Activated T-helper 1 cell treated with anti-CD3 and anti-CD28 coated beads, Interleukin-12 subunit alpha, Interleukin-12 subunit beta, Interleukin-2, Interleukin-4 antibody, amounts not matched to agents 30 ng/mL and 10 ng/mL and 1 ng/mL, durations not matched to agents 14 hours and 24 hours and 36 hours (primary cell): ENCODE measurements at regions of chr1 and their contacts with region 1.

Region 1: DNA sequence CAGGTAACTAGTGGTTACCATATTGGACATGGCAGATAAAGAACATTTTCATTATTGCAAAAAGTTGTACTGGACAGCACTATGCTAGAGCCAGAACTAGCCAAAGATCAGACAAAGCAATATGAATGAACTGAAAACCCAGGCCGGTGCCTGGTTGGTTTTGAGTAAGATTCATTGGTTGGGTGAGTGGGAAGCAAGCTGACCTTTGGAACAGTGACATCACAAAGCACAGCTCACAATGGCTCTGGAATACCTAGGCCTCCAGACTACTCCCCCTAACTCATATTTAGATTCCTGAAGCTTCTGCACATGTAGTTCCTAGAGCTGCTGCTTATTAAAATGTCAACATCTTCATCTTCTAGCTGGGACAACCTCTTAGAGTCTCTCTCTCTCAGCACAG is at the start of gene TMCO2:
- DNase-seq: no peak
- H3K4me3 Mint-ChIP-seq: no peak within 1 kb of the TSS
- H3K27ac Mint-ChIP-seq: no peak within 1 kb of the TSS
- H3K4me1 Mint-ChIP-seq: peaks cover 39% of the 10 kb centered on the region
- H3K27me3 Mint-ChIP-seq: no peaks in the 10 kb centered on the region
- total RNA-seq, gene TMCO2: not detected in 2 replicates

Region 2: GRCh38 chr1:40204856-40205255 is 42.8 kb before region 1 on chr1:
- intact Hi-C with region 1: loop called (anchors 1 kb)
- DNase-seq: no peak
- H3K4me3 Mint-ChIP-seq: no peak overlapping the region
- H3K27ac Mint-ChIP-seq: no peak overlapping the region
- H3K4me1 Mint-ChIP-seq: peaks cover 5% of the 10 kb centered on the region
- H3K27me3 Mint-ChIP-seq: no peaks in the 10 kb centered on the region

Region 3: DNA sequence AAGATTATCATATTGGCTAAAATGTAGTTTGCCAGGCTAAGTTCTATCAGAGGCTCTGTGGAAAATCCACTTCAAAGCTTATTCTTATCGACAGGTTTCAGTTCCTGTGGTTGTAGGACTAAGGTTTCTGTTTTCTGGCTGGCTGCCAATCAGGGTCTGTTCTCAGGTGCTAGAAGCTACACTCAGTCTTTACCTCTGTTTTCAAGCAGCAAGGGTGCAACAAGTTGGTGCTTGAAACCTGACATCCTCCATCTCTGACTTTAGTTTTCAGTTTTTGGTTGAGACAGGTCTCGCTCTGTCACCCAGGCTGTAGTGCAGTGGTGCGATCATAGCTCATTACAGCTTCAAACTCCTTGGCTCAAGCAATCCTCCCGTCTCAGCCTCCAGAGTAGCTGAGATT is 15.2 kb before region 1 on chr1:
- intact Hi-C with region 1: no loop called
- DNase-seq: peak; percentile 71
- H3K4me3 Mint-ChIP-seq: peak overlapping the region; percentile 47
- H3K27ac Mint-ChIP-seq: peak overlapping the region; percentile 68
- H3K4me1 Mint-ChIP-seq: peaks cover 45% of the 10 kb centered on the region
- H3K27me3 Mint-ChIP-seq: no peaks in the 10 kb centered on the region

Region 4: DNA sequence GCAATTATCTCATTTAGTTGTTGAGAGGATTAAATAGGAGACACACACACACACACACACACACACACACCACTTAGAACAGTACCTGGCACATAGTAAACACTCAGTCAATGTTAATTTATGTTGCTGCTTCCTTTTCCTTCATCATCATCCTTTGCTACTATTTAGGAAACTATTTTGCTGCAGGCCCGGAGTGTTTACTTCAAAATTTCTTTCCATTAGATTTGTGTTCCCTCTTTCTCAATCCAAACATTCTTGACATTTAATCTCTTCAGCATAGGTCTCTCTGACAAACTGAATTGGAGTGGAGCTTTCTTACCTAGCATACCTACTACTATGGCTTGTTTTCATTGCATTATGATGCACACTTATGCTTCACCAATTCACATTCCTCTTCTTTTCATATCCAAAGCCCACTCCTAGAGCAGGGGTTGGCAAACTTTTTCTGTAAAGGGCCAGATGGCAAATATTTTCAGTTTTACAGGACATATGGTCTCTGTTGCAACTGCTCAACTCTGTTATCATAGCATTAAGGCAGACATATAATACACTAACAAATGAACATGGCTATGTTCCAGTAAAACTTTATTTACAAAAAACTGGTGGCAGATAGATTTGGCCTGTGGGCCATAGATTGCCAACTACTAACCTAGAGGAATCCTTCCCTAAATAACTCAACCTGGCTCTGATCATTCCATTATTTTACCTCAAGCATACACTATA is 945.0 kb after region 1 on chr1:
- intact Hi-C with region 1: no loop called
- DNase-seq: no peak
- H3K4me3 Mint-ChIP-seq: no peak overlapping the region
- H3K27ac Mint-ChIP-seq: no peak overlapping the region
- H3K4me1 Mint-ChIP-seq: no peaks in the 10 kb centered on the region
- H3K27me3 Mint-ChIP-seq: no peaks in the 10 kb centered on the region